Ovary (tissue), 10 donors: ENCODE measurements at regions of chr10 and their contacts with region 1.

Region 1: DNA sequence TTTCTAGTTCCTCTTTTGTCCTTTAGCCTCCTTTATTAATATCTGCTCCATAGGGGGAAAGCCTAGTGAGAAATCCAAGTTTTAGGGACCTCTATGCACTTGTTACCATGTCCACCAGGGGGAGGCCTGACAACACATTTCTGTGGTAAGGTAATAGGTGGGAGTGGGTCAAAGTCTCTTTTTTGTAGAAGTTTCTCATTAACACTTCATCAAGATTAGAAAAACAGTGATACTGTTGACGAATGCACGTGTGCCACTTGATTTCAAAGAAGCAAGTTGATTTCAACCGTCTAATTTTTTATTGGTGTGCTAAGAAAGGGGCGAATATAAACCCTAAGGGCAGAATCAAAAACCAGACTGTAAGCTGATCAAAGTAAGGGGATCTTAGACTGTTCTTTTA is 30.6 kb downstream of the CISD1 start:
- DNase-seq: peak in 3 of 5 donors; percentile 36 to 47 (median 43)
- H3K4me3 ChIP-seq: no peak overlapping the region
- H3K27ac ChIP-seq: no peak overlapping the region
- H3K4me1 ChIP-seq: no peaks in the 10 kb centered on the region
- H3K27me3 ChIP-seq: no peaks in the 10 kb centered on the region
- CTCF ChIP-seq: peak in 2 of 3 donors; percentile 37 to 57
- EP300 ChIP-seq: no peak
- POLR2A ChIP-seq: no peak

Region 2: DNA sequence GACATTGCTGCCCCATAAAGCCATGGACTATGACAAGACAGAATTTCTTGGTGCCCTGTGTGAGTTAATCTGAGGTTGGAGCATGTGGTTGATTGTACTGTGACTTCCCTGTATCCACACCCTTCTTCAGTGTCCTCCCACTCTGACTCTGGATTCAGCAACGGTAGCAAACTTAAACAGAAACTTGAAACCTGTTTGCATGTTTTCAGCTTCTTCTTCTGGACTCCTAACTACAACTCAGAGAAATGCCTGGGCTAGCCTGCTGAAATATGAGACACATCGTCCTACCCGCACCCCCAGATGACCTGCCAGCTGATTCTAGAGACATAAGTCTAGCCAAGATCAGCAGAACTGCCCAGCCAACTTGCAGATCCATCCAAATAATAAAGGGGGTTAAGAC is 110.3 kb before region 1 on chr10:
- intact Hi-C with region 1: loop called in 1 of 4 experiments (anchors 10 kb)
- DNase-seq: no peak
- H3K4me3 ChIP-seq: no peak overlapping the region
- H3K27ac ChIP-seq: no peak overlapping the region
- H3K4me1 ChIP-seq: peaks cover 2% of the 10 kb centered on the region
- H3K27me3 ChIP-seq: no peaks in the 10 kb centered on the region
- CTCF ChIP-seq: no peak
- EP300 ChIP-seq: no peak
- POLR2A ChIP-seq: no peak

Region 3: GRCh38 chr10:58201704-58202103 is 97.9 kb before region 1 on chr10:
- intact Hi-C with region 1: no loop called
- DNase-seq: no peak
- H3K4me3 ChIP-seq: no peak overlapping the region
- H3K27ac ChIP-seq: no peak overlapping the region
- H3K4me1 ChIP-seq: no peaks in the 10 kb centered on the region
- H3K27me3 ChIP-seq: no peaks in the 10 kb centered on the region
- CTCF ChIP-seq: no peak
- EP300 ChIP-seq: no peak
- POLR2A ChIP-seq: no peak